ENCODE measurements at regions of chr2 and their contacts with region 1.

Region 1: DNA sequence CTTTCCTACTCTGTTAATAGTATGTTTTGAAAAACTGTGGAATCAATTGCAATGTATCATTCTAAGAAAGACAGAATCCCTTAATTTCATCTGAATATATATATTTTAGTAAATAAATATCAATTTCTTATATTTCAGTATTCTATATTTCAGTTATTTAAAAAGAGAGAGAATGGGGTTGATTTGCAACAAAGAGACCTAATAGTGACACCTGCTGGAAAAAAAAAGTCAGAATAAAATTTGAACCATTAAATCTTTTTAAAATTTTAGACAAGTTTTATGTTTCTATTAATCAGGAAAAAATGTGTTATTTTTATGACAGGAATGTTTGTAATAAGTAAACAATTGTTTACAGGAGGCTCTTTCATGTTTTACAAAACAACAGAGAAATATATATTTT is 20.7 kb upstream of the CCNT2 start:
- DNase-seq: no peak
- ATAC-seq: no peak
- H3K4me3 ChIP-seq: no peak overlapping the region
- H3K27ac ChIP-seq: no peak overlapping the region
- H3K4me1 ChIP-seq: no peaks in the 10 kb centered on the region
- H3K27me3 ChIP-seq: peaks cover 0 to 4% of the 10 kb centered on the region in 2 experiments; a peak in 1 of 5 replicates
- CTCF ChIP-seq: peak in 2 of 3 experiments; percentile 9 to 56; a peak in 3 of 6 replicates
- EP300 ChIP-seq: no peak
- POLR2A ChIP-seq: no peak
- RAD21 ChIP-seq: peak; percentile 61 to 80

Region 2: DNA sequence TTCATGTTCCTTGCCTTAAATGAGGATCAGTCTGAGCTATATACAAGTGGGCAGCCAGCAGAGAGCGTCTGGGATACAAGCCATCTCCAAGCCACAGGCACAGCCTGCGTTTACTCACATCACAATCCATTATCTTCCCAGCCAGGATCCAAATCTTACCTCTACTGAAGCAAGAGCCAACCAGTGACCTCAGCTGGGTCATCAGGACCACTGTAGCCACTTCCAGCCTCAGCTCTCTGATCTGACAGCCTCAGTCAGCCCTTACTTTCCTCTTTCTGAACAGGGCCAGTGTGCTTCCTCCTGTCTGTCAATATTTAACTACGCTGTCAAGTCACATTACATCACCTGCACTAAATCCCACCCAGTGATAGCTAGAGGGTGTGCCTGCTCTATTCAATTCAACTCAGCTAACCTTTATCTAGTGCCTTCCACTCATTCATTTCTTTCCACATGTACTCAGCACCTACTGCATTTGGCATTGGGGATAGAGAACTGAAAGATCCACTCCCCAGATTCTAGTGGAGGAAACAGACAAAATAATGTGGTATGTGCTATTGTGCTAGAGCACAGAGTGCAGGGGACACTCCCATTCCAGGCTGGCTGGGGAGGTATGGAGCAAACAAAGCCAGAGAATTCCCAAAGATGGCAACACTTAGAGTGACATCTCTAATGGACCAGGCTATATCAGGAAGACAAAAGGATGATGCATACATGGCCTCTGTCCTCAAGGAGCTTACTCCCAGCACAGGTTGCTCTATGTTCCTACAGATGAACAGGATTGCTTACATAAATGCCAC is 1476.2 kb before region 1 on chr2:
- CTCF ChIA-PET with region 1: no interaction called
- POLR2A ChIA-PET with region 1: no interaction called
- in situ Hi-C with region 1: no loop called
- intact Hi-C with region 1: no loop called
- DNase-seq: no peak
- ATAC-seq: no peak
- H3K4me3 ChIP-seq: no peak overlapping the region
- H3K27ac ChIP-seq: no peak overlapping the region
- H3K4me1 ChIP-seq: no peaks in the 10 kb centered on the region
- H3K27me3 ChIP-seq: no peaks in the 10 kb centered on the region
- CTCF ChIP-seq: no peak
- EP300 ChIP-seq: no peak
- POLR2A ChIP-seq: no peak
- RAD21 ChIP-seq: no peak

Region 3: DNA sequence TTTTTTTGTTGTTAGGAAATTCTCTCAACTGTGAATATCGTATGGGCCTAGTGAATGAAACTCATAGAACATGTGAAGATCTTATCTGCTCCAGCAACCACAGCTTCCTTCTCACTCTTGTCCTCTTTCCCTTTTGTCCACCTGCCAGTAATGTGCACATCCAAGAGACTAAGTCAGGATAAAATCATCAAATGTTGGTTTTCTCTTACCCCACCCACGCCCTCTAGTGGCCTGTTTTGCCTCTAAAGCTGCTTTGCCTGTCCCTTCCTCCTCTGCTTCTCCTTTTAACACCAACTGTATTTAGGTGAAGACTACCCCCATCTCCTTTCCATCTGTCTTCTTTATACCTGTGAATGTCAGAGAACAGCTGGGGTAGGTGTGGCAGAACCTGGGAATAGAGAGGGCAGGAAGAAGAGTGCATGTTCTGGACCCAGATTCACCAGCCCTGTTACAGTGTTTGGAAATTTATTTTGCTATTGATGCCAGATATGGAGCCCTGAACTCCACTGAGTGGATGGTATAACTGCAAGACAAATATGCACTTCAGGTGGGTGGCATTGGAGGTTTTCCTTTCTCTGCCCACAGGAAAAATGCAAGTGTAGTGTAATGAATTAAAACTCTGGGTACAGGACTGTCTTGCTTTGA is 652.5 kb before region 1 on chr2:
- CTCF ChIA-PET with region 1: no interaction called
- POLR2A ChIA-PET with region 1: no interaction called
- in situ Hi-C with region 1: no loop called
- intact Hi-C with region 1: no loop called
- DNase-seq: peak; percentile 35 to 78 (median 39)
- ATAC-seq: peak; percentile 89
- H3K4me3 ChIP-seq: no peak overlapping the region
- H3K27ac ChIP-seq: no peak overlapping the region
- H3K4me1 ChIP-seq: peaks cover 4 to 8% of the 10 kb centered on the region in 2 experiments; a peak in 2 of 5 replicates
- H3K27me3 ChIP-seq: no peaks in the 10 kb centered on the region
- CTCF ChIP-seq: peak; percentile 66 to 81 (median 77)
- EP300 ChIP-seq: no peak
- POLR2A ChIP-seq: no peak
- RAD21 ChIP-seq: peak; percentile 75 to 77

Region 4: GRCh38 chr2:134452042-134452733 is 445.7 kb before region 1 on chr2:
- CTCF ChIA-PET with region 1: interaction called, 13 read pairs
- POLR2A ChIA-PET with region 1: no interaction called
- in situ Hi-C with region 1: no loop called
- intact Hi-C with region 1: no loop called
- DNase-seq: no peak
- ATAC-seq: no peak
- H3K4me3 ChIP-seq: no peak overlapping the region
- H3K27ac ChIP-seq: no peak overlapping the region
- H3K4me1 ChIP-seq: no peaks in the 10 kb centered on the region
- H3K27me3 ChIP-seq: peaks cover 0 to 25% of the 10 kb centered on the region in 2 experiments; a peak in 3 of 5 replicates
- CTCF ChIP-seq: no peak
- EP300 ChIP-seq: no peak
- POLR2A ChIP-seq: no peak
- RAD21 ChIP-seq: no peak

Region 5: DNA sequence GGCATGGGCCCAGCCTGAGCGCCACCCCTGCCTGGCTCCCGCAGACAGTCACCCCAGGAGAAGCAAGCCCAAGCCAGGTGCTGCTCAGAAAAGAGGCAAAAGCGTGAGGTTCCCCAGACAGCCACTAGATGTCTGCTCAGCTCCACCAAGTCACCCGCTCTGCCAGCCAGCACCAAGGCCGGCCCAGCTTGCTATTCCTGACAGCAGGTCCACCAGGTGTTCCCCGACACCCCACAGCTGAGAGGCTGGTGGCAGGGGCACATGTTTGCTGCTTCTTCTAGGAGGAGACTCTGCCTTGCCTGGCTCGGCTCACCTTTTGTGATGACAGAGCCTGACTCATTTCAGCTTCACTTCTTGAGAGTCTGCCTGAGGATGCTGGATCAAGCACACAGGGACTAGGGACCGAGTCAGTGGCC is 437.3 kb before region 1 on chr2:
- CTCF ChIA-PET with region 1: interaction called, 7 read pairs
- POLR2A ChIA-PET with region 1: no interaction called
- in situ Hi-C with region 1: loop called (anchors 5 kb)
- intact Hi-C with region 1: loop called (anchors 2 kb)
- DNase-seq: peak; percentile 35 to 56 (median 44)
- ATAC-seq: peak; percentile 88
- H3K4me3 ChIP-seq: no peak overlapping the region
- H3K27ac ChIP-seq: no peak overlapping the region
- H3K4me1 ChIP-seq: no peaks in the 10 kb centered on the region
- H3K27me3 ChIP-seq: peaks cover 9 to 77% of the 10 kb centered on the region in 2 experiments
- CTCF ChIP-seq: peak; percentile 63 to 75 (median 65)
- EP300 ChIP-seq: no peak
- POLR2A ChIP-seq: no peak
- RAD21 ChIP-seq: peak; percentile 77 to 86

Region 6: DNA sequence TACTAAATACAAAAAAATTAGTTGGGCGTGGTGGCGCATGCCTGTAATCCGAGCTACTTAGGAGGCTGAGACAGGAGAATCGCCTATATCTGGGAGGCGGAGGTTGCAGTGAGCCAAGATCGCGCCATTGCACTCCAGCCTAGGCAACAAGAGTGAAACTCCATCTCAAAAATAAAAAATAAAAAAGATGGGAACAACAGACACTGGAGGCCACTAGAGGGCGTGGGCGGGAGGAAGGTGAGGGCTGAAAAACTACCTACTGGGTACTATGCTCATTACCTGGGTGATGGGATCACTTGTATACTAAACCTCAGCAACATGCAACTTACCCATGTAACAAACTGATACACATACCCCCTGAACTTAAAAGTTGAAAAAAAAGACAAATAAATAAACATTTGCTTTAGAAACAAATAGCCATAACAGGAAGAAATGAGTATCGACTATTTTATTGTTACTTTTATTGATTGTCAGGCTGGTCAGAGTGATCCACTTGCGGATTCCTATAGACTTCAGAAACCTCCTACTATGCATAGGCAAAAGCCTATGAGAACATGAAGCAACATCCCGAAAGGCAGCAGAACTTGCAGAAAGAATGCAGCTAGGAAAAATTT is 240.2 kb before region 1 on chr2:
- CTCF ChIA-PET with region 1: no interaction called
- POLR2A ChIA-PET with region 1: no interaction called
- in situ Hi-C with region 1: no loop called
- intact Hi-C with region 1: loop called (anchors 5 kb)
- DNase-seq: peak in 1 of 4 experiments; percentile 39
- ATAC-seq: peak; percentile 57; the same call in 2 of the 3 replicates
- H3K4me3 ChIP-seq: no peak overlapping the region
- H3K27ac ChIP-seq: no peak overlapping the region
- H3K4me1 ChIP-seq: no peaks in the 10 kb centered on the region
- H3K27me3 ChIP-seq: no peaks in the 10 kb centered on the region
- CTCF ChIP-seq: peak; percentile 55 to 62 (median 57)
- EP300 ChIP-seq: no peak
- POLR2A ChIP-seq: no peak
- RAD21 ChIP-seq: peak; percentile 30 to 67; a peak in 3 of 4 replicates

Measured in K562 (cell line).